ENCODE measurements at regions of chr1 and their contacts with region 1.

Region 1: DNA sequence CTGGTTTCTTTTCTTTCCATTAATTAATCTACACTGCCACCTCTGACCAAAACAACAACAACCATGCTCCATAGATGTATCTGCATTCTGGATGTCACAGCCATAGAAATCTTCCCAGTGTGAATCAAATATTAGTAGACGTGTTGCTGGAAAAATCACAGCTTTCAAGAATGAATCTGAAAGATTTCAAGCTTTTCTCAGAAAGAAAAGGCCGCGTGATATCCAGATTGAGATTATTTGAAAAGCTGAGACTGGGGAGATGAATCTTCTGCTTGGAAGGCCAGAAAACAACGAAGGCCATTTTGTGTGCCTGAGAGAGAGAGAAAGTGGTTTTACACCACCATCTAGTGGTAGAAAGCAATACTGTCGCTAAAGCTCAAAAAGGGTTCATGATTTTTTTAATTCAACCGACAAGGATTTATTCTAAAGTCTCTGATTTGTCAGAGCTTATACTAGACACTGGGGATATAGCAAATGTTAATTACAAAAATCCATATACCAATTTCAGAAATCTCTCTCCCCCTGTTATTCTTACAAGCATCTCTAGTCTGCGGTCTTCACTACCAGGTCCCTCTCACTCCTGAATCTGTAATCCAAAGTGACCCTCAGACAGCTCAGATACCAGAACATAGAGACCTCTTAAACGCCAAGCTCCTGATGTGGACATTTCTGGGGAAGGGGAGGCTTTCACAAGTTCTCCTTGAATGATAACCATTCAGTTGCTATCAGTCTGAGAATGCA is 87.5 kb upstream of the SGIP1 start:
- DNase-seq: peak; percentile 64
- CTCF ChIP-seq: peak; percentile 72

Region 2: DNA sequence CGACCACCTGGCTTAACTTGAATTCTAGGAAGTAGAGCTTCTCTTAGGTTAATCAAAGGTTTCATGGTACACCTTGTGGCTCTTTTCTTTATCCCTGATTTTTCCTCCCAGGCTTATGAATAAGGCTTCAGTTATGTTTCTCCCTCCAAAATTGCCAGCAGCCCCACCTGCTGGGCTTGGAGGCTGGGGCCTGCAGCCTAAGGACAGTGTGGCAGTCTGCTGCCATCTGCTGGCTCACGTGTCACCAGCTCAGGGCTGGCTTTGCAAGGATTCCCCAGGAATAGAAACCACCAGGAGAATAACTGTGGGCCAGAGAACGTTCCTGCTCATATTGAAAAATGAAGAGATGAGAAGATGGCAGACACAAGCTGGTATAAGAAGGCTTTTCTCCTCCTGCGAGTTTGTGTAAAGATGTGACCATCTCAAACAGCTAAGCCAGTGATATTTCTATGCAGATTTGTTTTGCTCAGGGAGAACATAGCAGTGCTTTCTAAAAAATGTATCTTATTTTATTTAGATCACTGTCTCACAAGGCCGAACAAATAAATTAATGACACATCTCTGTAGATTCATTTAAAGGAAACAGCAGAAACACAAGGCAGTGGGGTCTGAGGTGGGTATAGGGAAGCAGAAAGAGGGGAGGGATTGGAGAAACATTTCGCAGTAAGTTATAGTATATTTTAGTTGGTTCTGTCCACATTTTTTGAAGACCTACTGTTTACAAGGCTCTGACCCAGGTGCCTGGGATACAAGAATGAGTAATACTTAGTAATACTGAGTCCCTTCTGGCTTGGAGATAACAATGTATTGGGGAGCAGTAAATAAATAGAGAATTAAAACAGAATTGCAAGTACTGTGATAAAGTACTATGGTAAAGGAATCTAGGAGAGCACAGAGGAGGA is 203.5 kb before region 1 on chr1:
- CTCF ChIA-PET with region 1: interaction called, 516 read pairs
- POLR2A ChIA-PET with region 1: no interaction called
- DNase-seq: peak; percentile 64
- CTCF ChIP-seq: peak; percentile 100

Region 3: DNA sequence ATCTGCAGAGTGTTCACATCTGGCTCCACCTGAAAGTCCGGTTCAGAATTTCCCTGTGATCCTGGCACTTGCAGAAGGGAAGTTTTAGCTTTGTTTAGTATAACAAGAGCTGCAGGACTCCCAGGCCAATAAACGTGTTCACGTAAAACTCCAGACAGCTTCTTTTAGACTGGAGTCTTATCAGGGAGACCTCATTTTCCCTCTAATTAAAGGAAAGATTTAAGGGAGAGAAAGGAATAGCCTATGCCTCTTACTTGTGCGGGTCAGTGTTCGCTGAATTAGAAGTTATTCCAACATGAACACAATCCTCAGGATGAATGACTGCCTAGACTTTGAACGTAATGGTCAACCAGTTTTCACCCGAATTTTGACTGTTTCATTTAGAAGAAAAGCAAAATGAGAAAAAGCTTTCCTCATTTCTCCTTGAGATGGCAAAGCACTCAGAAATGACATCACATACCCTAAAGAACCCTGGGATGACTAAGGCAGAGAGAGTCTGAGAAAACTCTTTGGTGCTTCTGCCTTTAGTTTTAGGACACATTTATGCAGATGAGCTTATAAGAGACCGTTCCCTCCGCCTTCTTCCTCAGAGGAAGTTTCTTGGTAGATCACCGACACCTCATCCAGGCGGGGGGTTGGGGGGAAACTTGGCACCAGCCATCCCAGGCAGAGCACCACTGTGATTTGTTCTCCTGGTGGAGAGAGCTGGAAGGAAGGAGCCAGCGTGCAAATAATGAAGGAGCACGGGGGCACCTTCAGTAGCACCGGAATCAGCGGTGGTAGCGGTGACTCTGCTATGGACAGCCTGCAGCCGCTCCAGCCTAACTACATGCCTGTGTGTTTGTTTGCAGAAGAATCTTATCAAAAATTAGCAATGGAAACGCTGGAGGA is 114.5 kb before region 1 on chr1:
- CTCF ChIA-PET with region 1: interaction called, 11 read pairs
- POLR2A ChIA-PET with region 1: no interaction called
- DNase-seq: no peak
- CTCF ChIP-seq: no peak

Region 4: DNA sequence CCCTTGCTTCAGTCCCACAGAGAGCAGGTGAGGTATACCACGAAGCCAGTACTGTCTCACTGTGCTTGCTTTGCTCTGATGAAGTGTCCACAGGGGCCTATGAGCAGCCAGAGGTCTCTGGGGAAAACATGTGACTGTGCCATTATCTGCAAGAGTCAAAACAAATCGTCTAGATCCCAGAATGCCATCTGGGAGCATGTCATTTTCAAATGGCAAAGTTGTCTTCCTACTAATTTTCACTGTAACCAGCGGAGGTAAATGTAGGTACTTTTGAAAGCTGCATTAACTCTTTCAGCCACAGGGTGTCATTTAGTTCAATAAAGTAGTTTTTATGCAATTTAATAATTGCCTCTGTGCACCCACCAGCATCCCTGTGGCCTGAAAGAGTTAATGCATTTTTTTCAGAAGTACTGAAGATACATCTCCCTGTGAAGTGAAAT is 86.1 kb before region 1 on chr1:
- CTCF ChIA-PET with region 1: interaction called, 113 read pairs
- POLR2A ChIA-PET with region 1: no interaction called
- DNase-seq: no peak
- CTCF ChIP-seq: peak; percentile 36

Region 5: GRCh38 chr1:66402194-66402593 is 44.2 kb before region 1 on chr1:
- CTCF ChIA-PET with region 1: interaction called, 36 read pairs
- POLR2A ChIA-PET with region 1: no interaction called
- DNase-seq: peak; percentile 57
- CTCF ChIP-seq: no peak

Region 6: DNA sequence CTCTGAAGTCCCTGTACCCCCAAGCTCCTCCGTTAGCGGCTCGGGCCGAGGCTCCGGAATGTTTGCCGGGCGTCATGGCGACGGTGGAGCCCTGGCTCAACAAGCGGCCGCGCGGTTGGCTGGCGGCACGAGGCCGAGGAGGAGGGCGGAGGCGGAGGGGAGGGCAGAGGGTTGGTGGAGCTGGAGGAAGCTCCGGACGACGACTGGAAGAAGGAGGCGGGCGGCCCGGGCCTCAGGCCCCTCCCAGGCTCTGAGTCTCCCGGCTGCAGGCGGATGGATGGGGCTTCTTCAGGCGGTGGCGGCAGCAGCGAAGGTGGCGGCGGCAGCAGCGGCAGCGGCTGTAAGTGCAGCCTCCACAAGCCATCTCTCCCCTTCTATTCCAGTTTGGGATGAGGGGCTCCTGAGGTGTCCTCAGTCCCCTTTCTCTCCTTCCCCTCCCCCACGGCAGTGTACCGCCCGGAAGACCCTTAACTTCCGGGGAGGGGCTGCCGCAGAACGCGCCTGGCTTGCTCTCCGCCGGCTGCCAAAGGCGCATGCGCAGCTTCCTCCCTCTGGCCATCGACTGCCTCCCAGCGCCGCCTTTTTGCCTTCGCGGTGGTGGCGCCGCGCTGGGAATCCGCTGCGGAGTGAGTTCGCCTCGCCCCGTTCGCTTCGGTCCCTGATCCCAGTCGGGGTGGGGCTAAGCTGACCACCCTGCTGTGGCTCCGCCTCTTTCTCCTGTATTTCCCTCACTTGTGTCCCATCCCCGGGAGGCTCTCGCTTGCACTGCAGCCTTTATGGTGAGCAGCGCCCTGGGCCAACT is 478.5 kb after region 1 on chr1 and contains the starts of genes DNAI4 and MIER1:
- CTCF ChIA-PET with region 1: no interaction called
- POLR2A ChIA-PET with region 1: no interaction called
- DNase-seq: peak; percentile 99
- CTCF ChIP-seq: no peak

Measured in GM10248 (cell line).